Natural killer cell (primary cell): ENCODE measurements at regions of chr3 and their contacts with region 1.

Region 1: GRCh38 chr3:185983495-185984141 is 45.8 kb upstream of the TRA2B start:
- DNase-seq: peak; percentile 39 to 82
- ATAC-seq: peak; percentile 73 to 90 (median 76)
- H3K4me3 ChIP-seq: no peak overlapping the region
- H3K4me3 Mint-ChIP-seq: no peak overlapping the region
- H3K27ac ChIP-seq: no peak overlapping the region
- H3K27ac Mint-ChIP-seq: no peak overlapping the region
- H3K4me1 ChIP-seq: peaks cover 7% of the 10 kb centered on the region
- H3K4me1 Mint-ChIP-seq: peaks cover 5 to 6% of the 10 kb centered on the region in 2 donors
- H3K27me3 ChIP-seq: peaks cover 8% of the 10 kb centered on the region
- H3K27me3 Mint-ChIP-seq: peaks cover 8 to 15% of the 10 kb centered on the region in 2 donors
- CTCF ChIP-seq: peak; percentile 95

Region 2: DNA sequence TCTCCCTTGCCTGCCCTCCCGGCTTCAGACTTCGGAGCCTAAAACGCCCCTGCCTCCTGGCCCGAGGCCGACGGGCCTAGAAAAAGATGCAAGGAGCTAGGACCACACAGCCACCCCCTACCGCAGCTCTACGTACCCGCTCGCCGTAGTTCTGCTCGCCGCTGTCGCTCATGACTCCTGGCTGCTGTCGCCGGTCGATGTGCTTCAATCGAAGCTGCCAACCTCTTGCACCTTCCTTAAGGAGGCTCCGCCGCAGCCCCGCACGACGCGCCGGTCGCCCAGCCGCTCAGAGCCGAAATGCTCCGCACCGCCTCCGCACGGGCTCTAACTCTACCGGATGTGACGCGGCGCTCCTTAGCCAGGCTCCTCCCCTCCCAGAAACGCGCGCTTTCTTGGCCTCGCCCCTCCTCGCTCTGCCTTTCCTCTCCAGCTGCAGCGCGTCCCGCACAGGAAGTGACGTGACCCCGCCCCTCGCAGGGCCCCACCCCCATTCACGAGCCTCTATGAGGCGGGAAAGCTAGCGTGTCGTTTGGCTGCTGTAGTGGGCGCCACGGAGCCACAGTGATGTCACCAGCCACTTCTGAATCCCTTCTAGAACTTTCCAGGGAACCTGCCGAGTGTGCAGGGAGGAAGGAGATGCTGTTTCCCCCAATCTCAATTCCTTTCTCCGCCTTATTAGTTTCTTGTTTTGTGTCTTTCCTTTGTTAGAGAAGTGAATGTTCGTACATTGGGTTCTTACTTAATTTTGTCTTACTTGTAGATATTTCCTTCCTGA is 45.7 kb before region 1 on chr3 and contains the start of gene TRA2B:
- intact Hi-C with region 1: no loop called
- DNase-seq: peak; percentile 97 to 99
- ATAC-seq: peak; percentile 87 to 96 (median 88)
- H3K4me3 ChIP-seq: peak within 1 kb of the TSS; percentile 100
- H3K4me3 Mint-ChIP-seq: peak within 1 kb of the TSS; percentile 100
- H3K27ac ChIP-seq: peak within 1 kb of the TSS; percentile 100
- H3K27ac Mint-ChIP-seq: peak within 1 kb of the TSS; percentile 100
- H3K4me1 ChIP-seq: peaks cover 5% of the 10 kb centered on the region
- H3K4me1 Mint-ChIP-seq: peaks cover 53% of the 10 kb centered on the region in 2 donors
- H3K27me3 ChIP-seq: no peaks in the 10 kb centered on the region
- H3K27me3 Mint-ChIP-seq: no peaks in the 10 kb centered on the region
- CTCF ChIP-seq: peak; percentile 37
- total RNA-seq, gene TRA2B: 565 to 669 (median 596) TPM

Region 3: GRCh38 chr3:186162221-186162620 is 178.6 kb after region 1 on chr3:
- intact Hi-C with region 1: no loop called
- DNase-seq: no peak
- ATAC-seq: peak in 1 of 3 donors; percentile 46
- H3K4me3 ChIP-seq: no peak overlapping the region
- H3K4me3 Mint-ChIP-seq: no peak overlapping the region
- H3K27ac ChIP-seq: no peak overlapping the region
- H3K27ac Mint-ChIP-seq: no peak overlapping the region
- H3K4me1 ChIP-seq: no peaks in the 10 kb centered on the region
- H3K4me1 Mint-ChIP-seq: no peaks in the 10 kb centered on the region
- H3K27me3 ChIP-seq: peaks cover 3% of the 10 kb centered on the region
- H3K27me3 Mint-ChIP-seq: peaks cover 7 to 12% of the 10 kb centered on the region in 2 donors
- CTCF ChIP-seq: no peak

Region 4: DNA sequence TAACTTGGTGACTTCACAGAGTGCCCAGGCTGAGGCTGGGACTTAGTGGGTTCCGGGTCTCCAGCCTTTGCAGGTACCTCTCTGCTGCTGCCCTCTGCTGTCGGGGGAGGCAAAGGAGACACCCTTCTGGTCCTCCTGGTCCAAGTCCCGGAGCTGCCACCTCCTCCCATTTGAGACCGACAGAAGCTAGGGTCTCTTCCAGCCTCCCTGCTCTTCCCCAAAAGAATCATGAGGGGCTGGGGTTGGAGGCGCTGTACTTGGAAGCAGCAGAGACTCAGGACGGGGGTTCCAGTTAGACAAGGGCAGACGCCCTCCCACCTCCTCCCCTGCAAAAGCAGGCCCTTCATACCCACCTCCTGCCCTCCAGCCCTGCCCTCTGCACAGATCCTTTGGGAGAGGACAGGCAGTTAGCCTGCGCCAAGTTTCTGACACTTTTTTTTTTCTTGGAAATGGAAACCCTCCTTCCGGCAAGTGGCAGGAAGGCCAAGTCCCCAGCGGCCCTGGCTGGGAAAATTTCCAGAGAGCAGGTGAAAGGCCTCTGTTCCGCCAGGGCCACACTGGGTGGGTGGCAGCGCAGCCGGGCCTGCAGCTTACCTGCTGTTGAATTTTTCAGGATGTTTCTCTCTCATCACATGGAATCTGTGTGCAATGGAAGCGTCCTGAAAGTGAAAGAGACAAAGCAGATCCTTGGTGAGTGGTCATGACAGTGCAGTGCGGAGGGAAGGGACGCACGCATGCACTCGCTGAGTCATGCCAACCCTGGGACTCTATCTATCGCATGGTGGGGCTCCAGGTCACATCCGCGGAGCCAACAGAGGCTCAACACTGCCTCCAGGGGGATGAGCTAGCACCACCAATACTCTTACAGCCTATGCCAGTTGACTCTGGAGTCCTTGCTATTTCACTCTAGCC is 258.5 kb after region 1 on chr3:
- intact Hi-C with region 1: loop called (anchors 1 kb)
- DNase-seq: peak; percentile 24 to 61
- ATAC-seq: peak; percentile 79 to 98 (median 86)
- H3K4me3 ChIP-seq: no peak overlapping the region
- H3K4me3 Mint-ChIP-seq: no peak overlapping the region
- H3K27ac ChIP-seq: no peak overlapping the region
- H3K27ac Mint-ChIP-seq: no peak overlapping the region
- H3K4me1 ChIP-seq: peaks cover 11% of the 10 kb centered on the region
- H3K4me1 Mint-ChIP-seq: no peaks in the 10 kb centered on the region
- H3K27me3 ChIP-seq: no peaks in the 10 kb centered on the region
- H3K27me3 Mint-ChIP-seq: peaks cover 2 to 6% of the 10 kb centered on the region in 2 donors
- CTCF ChIP-seq: peak; percentile 15

Region 5: DNA sequence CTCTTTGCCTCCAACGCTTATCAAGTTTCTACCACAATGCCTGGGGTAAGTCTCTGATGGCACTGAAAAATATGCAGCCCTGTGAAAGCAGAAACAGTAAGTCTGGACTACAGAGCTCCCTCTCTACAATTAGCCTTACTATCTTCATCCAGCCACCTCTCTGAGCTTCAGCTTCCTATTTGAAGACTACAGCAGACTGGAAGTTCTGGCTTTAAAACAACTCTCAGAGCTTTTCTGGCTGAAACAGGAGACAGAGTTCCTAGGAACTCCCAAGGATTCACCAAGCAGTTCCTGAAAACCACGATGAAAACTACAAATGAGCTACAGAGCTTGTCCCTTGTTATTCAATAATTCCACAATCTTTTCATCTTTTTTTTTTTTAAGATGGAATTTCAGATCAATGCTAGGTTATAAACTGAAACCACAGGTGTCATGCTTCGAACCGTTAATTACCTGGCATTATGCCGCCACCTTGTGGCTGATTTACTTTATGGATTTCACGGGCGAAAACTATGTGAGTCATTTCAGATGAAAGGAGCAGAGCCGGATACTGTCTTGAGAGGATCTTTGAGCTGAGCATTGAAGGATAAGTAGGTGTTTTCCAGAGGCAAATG is 556.7 kb after region 1 on chr3:
- intact Hi-C with region 1: loop called (anchors 1 kb)
- DNase-seq: peak; percentile 62 to 93
- ATAC-seq: peak; percentile 84 to 94 (median 94)
- H3K4me3 ChIP-seq: no peak overlapping the region
- H3K4me3 Mint-ChIP-seq: peak overlapping the region; percentile 26
- H3K27ac ChIP-seq: no peak overlapping the region
- H3K27ac Mint-ChIP-seq: peak overlapping the region in 1 of 2 donors; percentile 75
- H3K4me1 ChIP-seq: no peaks in the 10 kb centered on the region
- H3K4me1 Mint-ChIP-seq: peaks cover 8% of the 10 kb centered on the region in 2 donors
- H3K27me3 ChIP-seq: no peaks in the 10 kb centered on the region
- H3K27me3 Mint-ChIP-seq: no peaks in the 10 kb centered on the region
- CTCF ChIP-seq: peak; percentile 75

Region 6: DNA sequence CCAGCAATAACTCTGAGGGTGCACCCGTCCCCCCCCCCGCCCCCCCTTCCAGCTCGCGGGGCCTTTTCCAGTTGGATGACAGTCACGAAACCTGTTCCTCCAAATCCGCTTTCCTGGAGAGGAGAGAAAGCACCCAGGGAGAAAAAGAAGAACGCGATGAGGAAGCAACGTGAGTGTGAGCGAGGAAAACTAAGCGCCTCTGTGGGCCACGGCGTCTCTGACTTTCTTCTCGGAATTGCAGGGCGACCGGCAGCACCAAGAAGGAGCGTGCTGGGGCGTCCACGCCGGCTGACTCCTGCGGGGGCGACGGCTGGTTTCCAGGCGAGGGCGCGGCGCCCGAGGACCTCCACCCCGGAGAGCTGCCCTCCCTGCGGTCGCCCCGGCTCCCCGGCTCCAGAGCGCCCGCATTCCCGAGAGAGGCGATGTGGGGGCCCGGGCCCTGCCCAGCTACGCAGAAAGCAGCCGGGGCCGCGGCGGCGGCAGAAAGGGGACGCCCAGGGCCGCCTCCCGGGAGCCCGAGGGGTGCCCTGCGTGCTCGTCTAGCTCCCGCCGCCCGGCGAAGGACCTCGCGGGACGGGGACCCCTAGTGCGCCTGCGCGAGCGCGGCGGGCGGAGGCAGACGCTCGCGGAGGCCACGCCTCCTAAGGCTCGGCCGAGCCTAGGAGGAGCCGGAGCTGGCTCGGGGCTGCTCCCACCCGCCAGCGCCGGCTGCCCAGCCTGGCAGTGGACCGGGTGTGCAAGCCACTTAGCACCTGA is 843.5 kb after region 1 on chr3:
- intact Hi-C with region 1: loop called (anchors 10 kb)
- DNase-seq: peak; percentile 81 to 96
- ATAC-seq: peak; percentile 95
- H3K4me3 ChIP-seq: peak overlapping the region; percentile 53
- H3K4me3 Mint-ChIP-seq: peak overlapping the region; percentile 78
- H3K27ac ChIP-seq: no peak overlapping the region
- H3K27ac Mint-ChIP-seq: no peak overlapping the region
- H3K4me1 ChIP-seq: peaks cover 31% of the 10 kb centered on the region
- H3K4me1 Mint-ChIP-seq: peaks cover 11 to 20% of the 10 kb centered on the region in 2 donors
- H3K27me3 ChIP-seq: peaks cover 45% of the 10 kb centered on the region
- H3K27me3 Mint-ChIP-seq: peaks cover 53 to 54% of the 10 kb centered on the region in 2 donors
- CTCF ChIP-seq: no peak